GM12878 (cell line): ENCODE measurements at regions of chr5 and their contacts with region 1.

Region 1: DNA sequence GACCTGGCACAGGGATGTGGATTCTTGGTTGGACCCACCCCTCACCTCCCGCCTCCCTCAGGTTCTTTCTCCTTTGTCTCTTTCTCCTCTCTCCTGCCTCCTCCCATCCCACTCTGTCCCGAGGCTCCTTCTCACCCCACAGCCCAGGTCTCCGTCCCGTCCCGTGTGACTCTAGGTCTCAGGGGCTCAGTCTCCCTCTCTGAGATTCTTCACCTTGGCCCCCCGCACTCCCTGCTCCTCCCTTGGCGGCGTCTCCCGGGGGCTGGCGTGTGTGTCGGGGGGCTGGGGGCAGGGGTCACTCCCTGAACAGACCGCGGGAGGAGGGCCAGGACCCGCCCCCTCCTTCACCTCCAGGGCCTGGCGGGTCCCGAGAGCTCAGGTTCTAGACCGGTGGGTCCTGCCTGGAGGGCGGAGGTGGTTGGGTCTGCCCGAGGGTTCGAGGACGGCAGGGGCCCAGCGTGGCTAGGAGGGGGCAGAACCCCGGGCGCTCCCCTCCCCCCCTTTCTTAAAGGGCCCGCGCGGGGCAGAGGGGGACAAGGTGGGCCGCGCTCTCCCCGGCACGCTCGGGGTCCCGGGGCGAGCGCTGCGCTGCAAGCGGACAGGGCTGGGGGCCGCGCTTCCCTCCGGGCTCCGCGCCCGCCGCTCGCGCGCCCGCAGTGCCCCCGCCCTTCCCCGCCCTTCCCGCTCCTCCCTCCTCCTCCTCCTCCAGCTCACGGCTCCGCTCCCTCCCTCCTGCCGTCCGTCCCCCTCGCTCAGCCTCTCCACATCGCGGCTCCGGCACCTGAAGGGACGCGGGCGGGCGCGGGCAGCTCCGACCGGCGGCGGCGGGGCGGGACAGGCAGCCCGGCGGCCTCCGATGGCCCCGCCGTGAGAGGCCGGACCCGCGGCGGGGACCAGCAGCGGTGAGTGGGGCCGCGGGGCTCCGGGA is at the start of gene PSD2:
- DNase-seq: no peak
- ATAC-seq: no peak
- H3K4me3 ChIP-seq: no peak within 1 kb of the TSS
- H3K27ac ChIP-seq: no peak within 1 kb of the TSS
- H3K4me1 ChIP-seq: no peaks in the 10 kb centered on the region
- H3K27me3 ChIP-seq: peaks cover 18 to 19% of the 10 kb centered on the region in 2 experiments
- CTCF ChIP-seq: no peak
- EP300 ChIP-seq: no peak
- POLR2A ChIP-seq: no peak
- RAD21 ChIP-seq: no peak
- polyA plus RNA-seq, gene PSD2: 0.02 TPM in 1 of 2 experiments, not detected in the other

Region 2: GRCh38 chr5:139822553-139823425 is 27.5 kb after region 1 on chr5:
- CTCF ChIA-PET with region 1: no interaction called
- POLR2A ChIA-PET with region 1: no interaction called
- RAD21 ChIA-PET with region 1: no interaction called
- SMC1A ChIA-PET with region 1: no interaction called
- in situ Hi-C with region 1: no loop called
- intact Hi-C with region 1: loop called (anchors 1 kb)
- DNase-seq: no peak
- ATAC-seq: no peak
- H3K4me3 ChIP-seq: no peak overlapping the region
- H3K27ac ChIP-seq: no peak overlapping the region
- H3K4me1 ChIP-seq: no peaks in the 10 kb centered on the region
- H3K27me3 ChIP-seq: peaks cover 2 to 10% of the 10 kb centered on the region in 2 experiments; a peak in 3 of 4 replicates
- CTCF ChIP-seq: no peak
- EP300 ChIP-seq: no peak
- POLR2A ChIP-seq: no peak
- RAD21 ChIP-seq: no peak